ENCODE measurements at regions of chr12 and their contacts with region 1.

Region 1: GRCh38 chr12:85206543-85206942 is 73.5 kb upstream of the ALX1 start:
- H3K4me3 ChIP-seq: no peak overlapping the region
- H3K27ac ChIP-seq: no peak overlapping the region
- H3K4me1 ChIP-seq: no peaks in the 10 kb centered on the region
- CTCF ChIP-seq: no peak

Region 2: GRCh38 chr12:85225501-85225900 is 19.0 kb after region 1 on chr12:
- CTCF ChIA-PET with region 1: interaction called, 10 read pairs
- POLR2A ChIA-PET with region 1: no interaction called
- H3K4me3 ChIP-seq: no peak overlapping the region
- H3K27ac ChIP-seq: no peak overlapping the region
- H3K4me1 ChIP-seq: no peaks in the 10 kb centered on the region
- CTCF ChIP-seq: no peak